HCT116 (cell line): ENCODE measurements at regions of chr3 and their contacts with region 1.

Region 1: GRCh38 chr3:126752303-126752842 is 48.3 kb downstream of the CHCHD6 start:
- DNase-seq: peak; percentile 38
- ATAC-seq: peak; percentile 99
- H3K4me3 ChIP-seq: no peak overlapping the region
- H3K27ac ChIP-seq: no peak overlapping the region
- H3K4me1 ChIP-seq: no peaks in the 10 kb centered on the region
- H3K27me3 ChIP-seq: no peaks in the 10 kb centered on the region
- CTCF ChIP-seq: peak; percentile 87 to 96 (median 91)
- POLR2A ChIP-seq: no peak
- RAD21 ChIP-seq: peak; percentile 96

Region 2: GRCh38 chr3:126982471-126983175 is 230.2 kb after region 1 on chr3 and contains the start of gene PLXNA1:
- CTCF ChIA-PET with region 1: interaction called, 6 read pairs
- POLR2A ChIA-PET with region 1: no interaction called
- RAD21 ChIA-PET with region 1: no interaction called
- intact Hi-C with region 1: loop called (anchors 1 kb)
- DNase-seq: peak; percentile 64
- ATAC-seq: peak; percentile 85
- H3K4me3 ChIP-seq: peak within 1 kb of the TSS; percentile 67 to 74
- H3K27ac ChIP-seq: peak within 1 kb of the TSS; percentile 67; the same call in 1 of the 2 replicates
- H3K4me1 ChIP-seq: peaks cover 2 to 19% of the 10 kb centered on the region in 2 experiments; a peak in 3 of 4 replicates
- H3K27me3 ChIP-seq: no peaks in the 10 kb centered on the region
- CTCF ChIP-seq: peak; percentile 81 to 97 (median 91)
- POLR2A ChIP-seq: peak; percentile 48
- RAD21 ChIP-seq: peak; percentile 66
- total RNA-seq, gene PLXNA1: 30.3 TPM

Region 3: GRCh38 chr3:127177231-127177630 is 424.9 kb after region 1 on chr3:
- CTCF ChIA-PET with region 1: interaction called, 3 read pairs
- POLR2A ChIA-PET with region 1: no interaction called
- RAD21 ChIA-PET with region 1: no interaction called
- intact Hi-C with region 1: loop called (anchors 2 kb)
- DNase-seq: no peak
- ATAC-seq: peak; percentile 41; the same call in 1 of the 2 replicates
- H3K4me3 ChIP-seq: no peak overlapping the region
- H3K27ac ChIP-seq: no peak overlapping the region
- H3K4me1 ChIP-seq: peaks cover 10 to 14% of the 10 kb centered on the region in 2 experiments
- H3K27me3 ChIP-seq: no peaks in the 10 kb centered on the region
- CTCF ChIP-seq: peak; percentile 14 to 38 (median 19); a peak in 2 of 6 replicates
- POLR2A ChIP-seq: no peak
- RAD21 ChIP-seq: peak; percentile 57

Region 4: GRCh38 chr3:127473244-127474024 is 721.1 kb after region 1 on chr3:
- CTCF ChIA-PET with region 1: interaction called, 3 read pairs
- POLR2A ChIA-PET with region 1: no interaction called
- RAD21 ChIA-PET with region 1: no interaction called
- intact Hi-C with region 1: loop called (anchors 5 kb)
- DNase-seq: peak; percentile 27
- ATAC-seq: peak; percentile 94
- H3K4me3 ChIP-seq: no peak overlapping the region
- H3K27ac ChIP-seq: no peak overlapping the region
- H3K4me1 ChIP-seq: peaks cover 0 to 4% of the 10 kb centered on the region in 2 experiments; a peak in 1 of 4 replicates
- H3K27me3 ChIP-seq: peaks cover 3% of the 10 kb centered on the region; the same call in 1 of the 2 replicates
- CTCF ChIP-seq: peak; percentile 60 to 78 (median 64); a peak in 5 of 6 replicates
- POLR2A ChIP-seq: no peak
- RAD21 ChIP-seq: peak; percentile 80